ENCODE measurements at regions of chr1 and their contacts with region 1.

Region 1: GRCh38 chr1:145845514-145846161 is at the start of gene NUDT17:
- DNase-seq: peak; percentile 59
- H3K4me3 Mint-ChIP-seq: no peak within 1 kb of the TSS
- H3K27ac Mint-ChIP-seq: peak within 1 kb of the TSS; percentile 19
- H3K4me1 Mint-ChIP-seq: peaks cover 5% of the 10 kb centered on the region
- H3K27me3 Mint-ChIP-seq: no peaks in the 10 kb centered on the region
- total RNA-seq, gene NUDT17: 2.6 and 3.4 TPM in 2 replicates

Region 2: DNA sequence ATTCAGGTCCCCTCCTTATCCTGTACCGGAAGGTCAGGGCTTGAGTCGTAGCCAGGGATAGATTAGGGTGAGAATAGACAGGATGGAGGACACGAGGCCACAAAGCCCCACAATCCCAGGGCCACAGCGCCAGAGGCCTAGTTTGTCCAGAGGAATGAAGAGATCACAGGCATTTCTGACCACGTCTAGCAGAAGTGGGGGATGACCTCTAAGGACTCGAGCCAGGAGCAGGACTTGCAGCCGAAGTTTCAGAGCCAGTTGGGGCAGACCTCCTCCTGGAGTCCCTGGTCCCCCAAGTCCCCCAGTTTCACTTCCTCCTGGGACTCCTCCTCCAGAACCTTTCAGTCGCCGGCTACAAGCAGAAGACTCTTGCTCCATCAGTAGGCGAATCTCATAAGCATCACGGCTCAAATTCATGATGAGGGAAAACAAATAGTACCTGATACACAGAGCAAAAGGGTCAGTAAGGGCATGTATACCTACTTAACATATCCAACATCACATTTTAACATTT is 66.5 kb after region 1 on chr1:
- intact Hi-C with region 1: loop called (anchors 5 kb)
- DNase-seq: no peak
- H3K4me3 Mint-ChIP-seq: no peak overlapping the region
- H3K27ac Mint-ChIP-seq: no peak overlapping the region
- H3K4me1 Mint-ChIP-seq: peaks cover 20% of the 10 kb centered on the region
- H3K27me3 Mint-ChIP-seq: no peaks in the 10 kb centered on the region

Region 3: GRCh38 chr1:146012737-146013403 is 167.2 kb after region 1 on chr1:
- intact Hi-C with region 1: loop called (anchors 5 kb)
- DNase-seq: no peak
- H3K4me3 Mint-ChIP-seq: no peak overlapping the region
- H3K27ac Mint-ChIP-seq: no peak overlapping the region
- H3K4me1 Mint-ChIP-seq: peaks cover 14% of the 10 kb centered on the region
- H3K27me3 Mint-ChIP-seq: peaks cover 24% of the 10 kb centered on the region

Measured in activated T-helper 2 cell treated with anti-CD3 and anti-CD28 coated beads, Interferon-gamma antibody, Interleukin-2, Interleukin-4, amounts not matched to agents 10 μg/mL and 5 μg/mL and 100 μg/mL, durations not matched to agents 14 hours and 24 hours and 36 hours (primary cell).